Esophagus squamous epithelium (tissue), 5 donors: ENCODE measurements at regions of chrX and their contacts with region 1.

Region 1: GRCh38 chrX:20530406-20530921 is 263.8 kb upstream of the RPS6KA3 start:
- DNase-seq: no peak
- H3K4me3 ChIP-seq: no peak overlapping the region
- H3K27ac ChIP-seq: no peak overlapping the region
- H3K4me1 ChIP-seq: peaks cover 0 to 5% (median 0%) of the 10 kb centered on the region in 3 donors
- H3K27me3 ChIP-seq: peaks cover 0 to 10% (median 0%) of the 10 kb centered on the region in 4 donors
- CTCF ChIP-seq: peak; percentile 44 to 75 (median 64)
- POLR2A ChIP-seq: no peak

Region 2: DNA sequence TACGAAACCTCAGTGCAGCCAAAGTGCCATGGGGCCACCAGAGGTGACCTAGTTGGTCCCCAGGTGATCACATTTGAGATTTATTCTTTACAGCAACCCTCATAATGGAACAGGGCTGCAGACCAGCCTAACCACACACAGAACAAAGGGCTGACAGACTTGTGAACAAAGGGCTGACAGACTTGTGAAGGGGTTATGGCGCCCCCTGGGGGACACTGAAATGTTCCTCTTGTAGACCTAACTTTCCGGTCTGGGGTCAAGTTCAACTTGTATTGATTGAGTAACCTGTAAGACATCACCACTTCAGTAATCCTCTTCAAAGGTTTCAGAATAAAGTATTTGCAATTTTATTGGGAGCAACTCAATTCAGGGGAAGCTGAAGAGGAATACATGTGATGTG is 87.9 kb before region 1 on chrX:
- intact Hi-C with region 1: no loop called
- DNase-seq: peak; percentile 22
- H3K4me3 ChIP-seq: no peak overlapping the region
- H3K27ac ChIP-seq: no peak overlapping the region
- H3K4me1 ChIP-seq: no peaks in the 10 kb centered on the region
- H3K27me3 ChIP-seq: no peaks in the 10 kb centered on the region
- CTCF ChIP-seq: peak; percentile 46 to 69 (median 60)
- POLR2A ChIP-seq: no peak

Region 3: DNA sequence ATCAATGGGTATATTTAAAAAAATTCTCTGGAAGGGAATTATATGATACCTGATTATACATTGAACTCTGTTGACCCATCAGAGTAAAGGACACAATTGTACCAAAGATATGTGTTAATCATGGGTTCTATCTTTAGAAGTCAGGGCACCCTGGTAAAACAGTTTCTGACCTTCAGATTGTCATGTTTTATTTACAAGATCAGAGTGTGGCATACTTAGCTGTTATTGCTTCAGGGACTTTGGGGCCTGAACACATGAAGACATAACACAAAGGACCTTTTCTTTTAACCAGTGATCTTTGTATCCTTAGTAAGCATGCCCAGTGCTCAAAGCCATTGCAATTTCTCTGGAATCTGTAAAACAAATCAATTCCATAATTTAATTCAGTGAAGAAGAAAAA is 59.0 kb before region 1 on chrX:
- intact Hi-C with region 1: no loop called
- DNase-seq: no peak
- H3K4me3 ChIP-seq: no peak overlapping the region
- H3K27ac ChIP-seq: no peak overlapping the region
- H3K4me1 ChIP-seq: no peaks in the 10 kb centered on the region
- H3K27me3 ChIP-seq: no peaks in the 10 kb centered on the region
- CTCF ChIP-seq: no peak
- POLR2A ChIP-seq: no peak

Region 4: DNA sequence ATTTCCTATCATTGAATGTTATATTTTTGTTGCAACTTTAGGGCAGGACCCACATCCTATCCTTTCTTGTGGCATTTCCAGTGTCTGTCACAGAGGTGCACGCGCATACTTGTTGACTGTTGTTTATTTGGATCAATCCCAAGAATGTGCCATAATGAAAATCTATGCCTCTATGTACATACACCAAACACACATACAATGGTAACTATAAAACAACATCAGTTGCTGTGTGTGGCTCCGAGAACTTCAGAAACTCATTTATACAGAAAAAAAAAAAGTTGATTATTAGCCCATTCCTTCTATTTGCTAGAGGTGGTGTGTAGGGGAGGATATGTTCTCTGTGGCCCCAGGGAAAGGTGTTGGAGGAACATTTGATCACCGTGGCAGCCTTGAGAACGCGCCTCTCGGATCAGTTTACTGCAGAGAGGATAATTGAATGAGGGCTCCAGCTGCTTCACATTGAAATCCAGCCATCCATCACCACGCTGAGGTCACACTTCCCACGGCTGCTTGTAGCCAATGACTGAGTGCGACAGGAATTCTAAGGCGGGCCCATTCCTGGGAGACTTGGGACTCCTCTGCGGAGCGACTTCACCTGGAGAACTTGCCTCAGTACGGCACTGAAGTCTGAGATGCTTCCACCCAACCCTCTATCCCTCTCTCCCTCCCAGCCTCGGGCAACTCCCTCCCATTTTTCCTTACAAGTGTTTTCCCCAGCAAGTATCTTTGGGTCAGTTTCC is 1207.9 kb after region 1 on chrX:
- intact Hi-C with region 1: loop called (anchors 10 kb)
- DNase-seq: no peak
- H3K4me3 ChIP-seq: no peak overlapping the region
- H3K27ac ChIP-seq: no peak overlapping the region
- H3K4me1 ChIP-seq: peaks cover 0 to 4% (median 0%) of the 10 kb centered on the region in 3 donors
- H3K27me3 ChIP-seq: no peaks in the 10 kb centered on the region
- CTCF ChIP-seq: no peak
- POLR2A ChIP-seq: no peak